Dendritic cell treated with granulocyte-macrophage colony-stimulating factor and Interleukin-4, amounts not matched to agents 40 ng/mL and 50 ng/mL, for 4 days (primary cell): ENCODE measurements at regions of chr7 and their contacts with region 1.

Region 1: GRCh38 chr7:121020652-121021051 is 32.1 kb downstream of the CPED1 start:
- H3K4me3 Mint-ChIP-seq: no peak overlapping the region
- H3K27ac Mint-ChIP-seq: no peak overlapping the region
- H3K4me1 Mint-ChIP-seq: peaks cover 39% of the 10 kb centered on the region
- H3K27me3 Mint-ChIP-seq: no peaks in the 10 kb centered on the region

Region 2: GRCh38 chr7:120987683-120988590 is 32.7 kb before region 1 on chr7:
- intact Hi-C with region 1: loop called (anchors 5 kb)
- H3K4me3 Mint-ChIP-seq: peak overlapping the region; percentile 88
- H3K27ac Mint-ChIP-seq: peak overlapping the region; percentile 74
- H3K4me1 Mint-ChIP-seq: peaks cover 20% of the 10 kb centered on the region
- H3K27me3 Mint-ChIP-seq: peaks cover 7% of the 10 kb centered on the region